Kidney (tissue), 22 donors: ENCODE measurements at regions of chr19 and their contacts with region 1.

Region 1: GRCh38 chr19:47231215-47231984 is 401 bp upstream of the BBC3 start:
- DNase-seq: peak; percentile 70 to 97 (median 91)
- H3K4me3 ChIP-seq: peak overlapping the region; percentile 43 to 82 (median 73)
- H3K27ac ChIP-seq: peak overlapping the region; percentile 29 to 86
- H3K4me1 ChIP-seq: peaks cover 2 to 37% (median 14%) of the 10 kb centered on the region in 3 donors
- H3K27me3 ChIP-seq: peaks cover 10% of the 10 kb centered on the region
- CTCF ChIP-seq: no peak

Region 2: DNA sequence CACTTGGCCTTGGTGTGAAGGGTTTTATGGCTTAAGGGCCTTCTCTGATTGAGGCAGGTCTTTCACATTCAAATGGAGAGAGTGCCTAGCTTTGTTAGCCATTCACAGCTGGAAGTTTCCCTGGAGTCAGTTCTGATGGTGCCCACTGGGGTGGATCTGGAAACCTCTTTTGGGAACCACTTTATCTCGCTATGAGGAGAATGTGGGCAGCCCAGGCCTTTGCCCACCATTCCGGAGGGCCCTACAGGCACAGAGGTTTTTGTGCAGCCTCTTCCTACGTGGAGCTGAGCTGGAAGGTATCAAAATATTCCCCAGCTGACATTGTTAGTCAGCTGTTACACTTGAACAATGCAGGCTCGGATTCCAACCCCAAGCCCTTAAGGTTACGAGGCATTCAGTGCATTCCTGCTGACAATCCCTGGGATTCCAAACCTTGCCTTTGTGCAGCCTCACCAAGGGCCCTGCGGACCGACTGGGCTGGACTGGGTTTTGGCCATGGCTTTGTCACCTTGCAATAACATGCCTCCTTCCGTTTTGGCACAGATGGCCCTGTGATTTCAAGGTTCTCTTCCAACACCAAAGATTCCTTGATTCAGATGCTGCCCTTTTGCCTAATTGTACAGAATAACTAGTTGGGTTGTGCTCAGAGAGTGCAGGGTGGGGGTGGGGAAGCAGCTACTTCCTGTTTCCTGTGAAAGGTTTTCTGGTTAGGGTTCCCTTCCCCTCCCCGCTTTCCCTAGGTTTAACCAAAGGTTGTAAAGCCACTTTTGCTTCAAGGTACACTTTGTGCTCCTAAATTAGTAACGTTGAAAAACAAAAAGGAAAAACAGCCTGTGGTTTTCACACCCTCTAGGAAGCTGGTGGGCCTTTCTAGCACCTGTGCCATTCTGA is 73.7 kb before region 1 on chr19:
- intact Hi-C with region 1: loop called (anchors 10 kb)
- DNase-seq: peak in 3 of 5 donors; percentile 20 to 65 (median 36)
- H3K4me3 ChIP-seq: no peak overlapping the region
- H3K27ac ChIP-seq: peak overlapping the region; percentile 45 to 75
- H3K4me1 ChIP-seq: peaks cover 8 to 16% (median 15%) of the 10 kb centered on the region in 3 donors
- H3K27me3 ChIP-seq: no peaks in the 10 kb centered on the region
- CTCF ChIP-seq: no peak